ENCODE measurements at regions of chr12 and their contacts with region 1.

Region 1: GRCh38 chr12:6335451-6336078 is 6.3 kb downstream of the TNFRSF1A start:
- DNase-seq: peak; percentile 73 to 90 (median 83)
- ATAC-seq: peak; percentile 72 to 80 (median 76)
- H3K4me3 ChIP-seq: peak overlapping the region; percentile 94 to 99
- H3K4me3 Mint-ChIP-seq: no peak overlapping the region
- H3K27ac ChIP-seq: peak overlapping the region; percentile 88
- H3K27ac Mint-ChIP-seq: no peak overlapping the region
- H3K4me1 ChIP-seq: peaks cover 58 to 79% of the 10 kb centered on the region in 2 experiments
- H3K4me1 Mint-ChIP-seq: peaks cover 8 to 31% (median 26%) of the 10 kb centered on the region in 3 donors
- H3K27me3 ChIP-seq: no peaks in the 10 kb centered on the region
- H3K27me3 Mint-ChIP-seq: no peaks in the 10 kb centered on the region

Region 2: GRCh38 chr12:6267139-6267721 is 68.3 kb before region 1 on chr12:
- CTCF ChIA-PET with region 1: no interaction called
- POLR2A ChIA-PET with region 1: no interaction called
- DNase-seq: peak in 1 of 35 experiments; percentile 7
- ATAC-seq: peak in 1 of 4 experiments; percentile 24
- H3K4me3 ChIP-seq: no peak overlapping the region
- H3K4me3 Mint-ChIP-seq: no peak overlapping the region
- H3K27ac ChIP-seq: no peak overlapping the region
- H3K27ac Mint-ChIP-seq: no peak overlapping the region
- H3K4me1 ChIP-seq: no peaks in the 10 kb centered on the region
- H3K4me1 Mint-ChIP-seq: no peaks in the 10 kb centered on the region
- H3K27me3 ChIP-seq: peaks cover 0 to 13% of the 10 kb centered on the region in 2 experiments
- H3K27me3 Mint-ChIP-seq: peaks cover 0 to 5% of the 10 kb centered on the region in 2 donors

Region 3: GRCh38 chr12:6323340-6323994 is 12.1 kb before region 1 on chr12:
- CTCF ChIA-PET with region 1: interaction called, 5 to 14 read pairs
- POLR2A ChIA-PET with region 1: no interaction called
- DNase-seq: peak in 18 of 35 experiments; percentile 17 to 76 (median 43)
- ATAC-seq: peak; percentile 79 to 86 (median 80)
- H3K4me3 ChIP-seq: peak overlapping the region in 1 of 2 donors; percentile 25
- H3K4me3 Mint-ChIP-seq: peak overlapping the region; percentile 72 to 74 (median 74)
- H3K27ac ChIP-seq: peak overlapping the region; percentile 66
- H3K27ac Mint-ChIP-seq: peak overlapping the region; percentile 95 to 97
- H3K4me1 ChIP-seq: peaks cover 11 to 52% of the 10 kb centered on the region in 2 experiments
- H3K4me1 Mint-ChIP-seq: peaks cover 51 to 57% (median 53%) of the 10 kb centered on the region in 3 donors
- H3K27me3 ChIP-seq: peaks cover 0 to 7% of the 10 kb centered on the region in 2 experiments
- H3K27me3 Mint-ChIP-seq: no peaks in the 10 kb centered on the region

Region 4: DNA sequence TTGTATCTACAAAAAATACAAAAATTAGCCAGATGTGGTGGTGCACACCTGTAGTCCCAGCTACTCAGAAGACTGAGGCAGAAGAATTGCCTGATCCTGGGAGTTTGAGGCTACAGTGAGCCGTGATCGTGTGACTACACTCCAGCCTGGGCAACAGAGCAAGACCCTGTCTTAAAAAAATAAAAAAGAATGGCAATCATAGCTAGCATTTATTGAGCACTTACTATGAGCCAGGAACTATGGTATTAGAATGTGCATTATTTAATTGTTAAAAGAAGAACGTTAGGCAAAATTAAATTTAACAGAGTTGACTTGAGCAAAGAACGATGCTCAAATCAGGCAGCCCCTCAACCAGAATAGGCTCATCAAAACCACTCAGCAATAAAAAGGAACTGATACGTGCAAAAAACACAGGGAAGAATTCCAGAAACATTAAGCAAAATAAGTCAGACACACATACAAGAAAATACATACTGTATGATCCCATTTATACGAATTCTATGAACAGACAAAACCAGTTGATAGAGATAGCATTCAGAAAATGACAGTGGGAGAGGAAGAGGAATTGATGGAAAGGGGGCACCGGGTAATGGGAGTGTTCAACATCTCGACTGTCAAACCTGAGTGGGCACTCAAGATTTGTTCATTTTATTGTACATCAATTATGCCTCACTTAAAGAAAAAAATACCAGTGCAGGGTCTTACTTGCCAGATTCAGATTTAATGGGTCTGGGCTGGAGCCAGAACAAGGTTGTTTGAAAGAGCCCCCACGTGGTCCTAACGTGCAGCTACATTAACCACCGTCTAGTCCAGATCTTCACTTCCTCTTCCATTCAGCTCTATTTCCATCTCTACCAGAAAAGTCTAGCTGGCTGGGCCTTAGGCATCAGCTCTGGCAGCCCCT is 31.8 kb after region 1 on chr12:
- CTCF ChIA-PET with region 1: interaction called, 9 to 74 read pairs
- POLR2A ChIA-PET with region 1: interaction called, 3 to 5 read pairs
- DNase-seq: peak in 28 of 35 experiments; percentile 20 to 73 (median 39)
- ATAC-seq: peak; percentile 58 to 65 (median 62)
- H3K4me3 ChIP-seq: no peak overlapping the region
- H3K4me3 Mint-ChIP-seq: no peak overlapping the region
- H3K27ac ChIP-seq: peak overlapping the region; percentile 54
- H3K27ac Mint-ChIP-seq: peak overlapping the region; percentile 36 to 81
- H3K4me1 ChIP-seq: peaks cover 9 to 40% of the 10 kb centered on the region in 2 experiments
- H3K4me1 Mint-ChIP-seq: peaks cover 20 to 30% (median 28%) of the 10 kb centered on the region in 3 donors
- H3K27me3 ChIP-seq: no peaks in the 10 kb centered on the region
- H3K27me3 Mint-ChIP-seq: no peaks in the 10 kb centered on the region

Region 5: DNA sequence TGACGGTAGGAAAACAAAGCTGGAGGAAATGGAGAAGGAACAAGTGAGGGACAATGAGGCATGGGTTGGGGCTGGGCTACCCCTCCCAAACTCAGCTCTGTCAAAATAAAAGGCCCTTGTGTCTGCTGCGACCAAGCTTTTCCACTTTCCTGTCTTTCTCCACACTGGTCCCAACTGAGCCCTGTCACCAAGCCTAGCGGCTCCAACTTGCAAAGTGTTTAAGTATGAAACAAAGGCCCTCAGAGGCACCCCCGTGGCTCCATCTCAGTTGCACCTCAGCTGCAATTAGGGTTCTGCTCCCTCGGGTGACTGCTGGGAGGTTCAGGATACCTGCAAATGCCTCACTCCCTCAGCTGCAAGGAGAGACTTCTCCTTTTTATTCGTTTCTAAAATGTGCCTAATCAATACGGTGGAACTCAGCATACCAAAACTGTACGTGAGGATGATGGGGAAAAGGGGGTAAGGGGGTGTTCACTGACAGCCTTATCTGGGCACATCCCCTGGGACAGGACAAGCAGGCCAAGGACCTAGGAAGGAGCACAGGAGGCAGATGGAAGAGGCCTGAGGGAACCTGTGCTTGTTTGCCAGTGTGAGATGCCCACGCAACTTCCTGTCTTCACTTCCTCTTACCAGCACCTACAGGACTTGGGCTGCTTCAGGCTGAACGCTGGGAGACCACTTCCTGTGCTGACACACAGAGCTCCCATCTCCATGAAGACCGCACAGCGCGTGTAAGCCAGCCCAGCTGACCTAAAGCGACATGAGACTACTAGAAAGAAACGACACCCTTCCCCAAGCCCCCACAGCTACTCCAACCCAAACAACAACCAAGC is 126.1 kb after region 1 on chr12:
- CTCF ChIA-PET with region 1: interaction called, 5 to 16 read pairs
- POLR2A ChIA-PET with region 1: no interaction called
- DNase-seq: peak; percentile 61 to 93 (median 85)
- ATAC-seq: peak; percentile 87 to 89 (median 88)
- H3K4me3 ChIP-seq: peak overlapping the region; percentile 29 to 30
- H3K4me3 Mint-ChIP-seq: peak overlapping the region; percentile 69 to 81 (median 69)
- H3K27ac ChIP-seq: peak overlapping the region; percentile 92
- H3K27ac Mint-ChIP-seq: peak overlapping the region; percentile 98
- H3K4me1 ChIP-seq: peaks cover 60 to 91% of the 10 kb centered on the region in 2 experiments
- H3K4me1 Mint-ChIP-seq: peaks cover 84 to 91% (median 90%) of the 10 kb centered on the region in 3 donors
- H3K27me3 ChIP-seq: no peaks in the 10 kb centered on the region
- H3K27me3 Mint-ChIP-seq: no peaks in the 10 kb centered on the region

Region 6: GRCh38 chr12:6493497-6494257 is 158.1 kb after region 1 on chr12 and contains the start of gene NCAPD2:
- CTCF ChIA-PET with region 1: no interaction called
- POLR2A ChIA-PET with region 1: interaction called in 1 of 2 experiments, 15 read pairs
- DNase-seq: peak; percentile 86 to 97 (median 94)
- ATAC-seq: peak; percentile 86 to 91 (median 90)
- H3K4me3 ChIP-seq: peak within 1 kb of the TSS; percentile 94 to 99
- H3K4me3 Mint-ChIP-seq: peak within 1 kb of the TSS; percentile 93 to 97 (median 93)
- H3K27ac ChIP-seq: peak within 1 kb of the TSS; percentile 88
- H3K27ac Mint-ChIP-seq: peak within 1 kb of the TSS; percentile 91 to 98
- H3K4me1 ChIP-seq: peaks cover 21 to 33% of the 10 kb centered on the region in 2 experiments
- H3K4me1 Mint-ChIP-seq: peaks cover 37 to 40% (median 40%) of the 10 kb centered on the region in 3 donors
- H3K27me3 ChIP-seq: no peaks in the 10 kb centered on the region
- H3K27me3 Mint-ChIP-seq: no peaks in the 10 kb centered on the region
- total RNA-seq, gene NCAPD2: 32.8 to 43.8 (median 40.7) TPM

Region 7: GRCh38 chr12:6533923-6534694 is 198.5 kb after region 1 on chr12 and contains the start of gene GAPDH:
- CTCF ChIA-PET with region 1: interaction called, 6 to 18 read pairs
- POLR2A ChIA-PET with region 1: interaction called in 1 of 2 experiments, 7 read pairs
- DNase-seq: peak in 20 of 35 experiments; percentile 66 to 88 (median 79)
- ATAC-seq: peak; percentile 7 to 51 (median 40)
- H3K4me3 ChIP-seq: peak within 1 kb of the TSS; percentile 90 to 96
- H3K4me3 Mint-ChIP-seq: peak within 1 kb of the TSS; percentile 90 to 97 (median 94)
- H3K27ac ChIP-seq: peak within 1 kb of the TSS; percentile 90
- H3K27ac Mint-ChIP-seq: peak within 1 kb of the TSS; percentile 98
- H3K4me1 ChIP-seq: peaks cover 27 to 62% of the 10 kb centered on the region in 2 experiments
- H3K4me1 Mint-ChIP-seq: peaks cover 47 to 58% (median 50%) of the 10 kb centered on the region in 3 donors
- H3K27me3 ChIP-seq: no peaks in the 10 kb centered on the region
- H3K27me3 Mint-ChIP-seq: no peaks in the 10 kb centered on the region
- total RNA-seq, gene GAPDH: 500 to 643 (median 605) TPM

Region 8: DNA sequence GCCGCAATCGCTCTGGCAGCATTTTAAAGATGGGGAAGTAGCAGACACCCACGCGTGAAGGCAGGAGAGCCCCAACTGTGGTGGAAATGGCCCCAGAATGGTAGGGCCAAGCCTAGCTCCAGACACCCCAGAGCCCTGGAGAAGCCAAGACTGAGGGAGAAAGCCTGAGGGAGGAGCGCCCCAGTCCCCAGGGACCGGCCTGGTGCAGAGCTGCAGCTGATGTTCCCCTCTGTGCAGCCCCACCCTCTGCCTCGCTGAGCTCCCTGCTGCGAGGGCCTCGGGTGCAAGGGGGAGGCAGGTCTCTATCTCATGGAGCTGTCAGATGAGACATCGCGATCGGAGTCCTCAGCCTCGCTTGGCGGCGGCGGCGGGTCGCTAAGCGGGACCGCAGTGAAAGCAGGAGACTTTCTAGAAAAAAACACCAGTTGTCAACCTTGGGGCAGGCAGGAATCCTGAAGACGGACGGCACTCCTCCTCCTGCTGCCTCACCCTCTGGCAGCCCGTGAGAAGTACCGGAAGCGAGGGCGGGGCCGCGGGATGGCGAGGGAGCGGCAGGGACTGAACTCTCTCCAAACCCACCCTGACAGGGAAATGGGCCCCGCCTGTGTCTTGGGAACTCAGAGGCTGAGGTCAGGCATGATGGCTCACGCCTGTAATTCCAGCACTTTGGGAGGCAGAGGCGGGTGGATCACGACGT is 204.8 kb after region 1 on chr12:
- CTCF ChIA-PET with region 1: interaction called, 6 to 18 read pairs
- POLR2A ChIA-PET with region 1: no interaction called
- DNase-seq: peak in 9 of 35 experiments; percentile 14 to 59 (median 42)
- ATAC-seq: peak; percentile 48 to 61 (median 53)
- H3K4me3 ChIP-seq: peak overlapping the region; percentile 3 to 18
- H3K4me3 Mint-ChIP-seq: peak overlapping the region; percentile 63 to 72 (median 70)
- H3K27ac ChIP-seq: peak overlapping the region; percentile 29
- H3K27ac Mint-ChIP-seq: peak overlapping the region; percentile 81 to 88
- H3K4me1 ChIP-seq: peaks cover 31 to 60% of the 10 kb centered on the region in 2 experiments
- H3K4me1 Mint-ChIP-seq: peaks cover 46 to 65% (median 47%) of the 10 kb centered on the region in 3 donors
- H3K27me3 ChIP-seq: no peaks in the 10 kb centered on the region
- H3K27me3 Mint-ChIP-seq: no peaks in the 10 kb centered on the region